ENCODE measurements at regions of chr11 and their contacts with region 1.

Region 1: GRCh38 chr11:85627998-85628770 is at the start of gene TMEM126B:
- DNase-seq: peak; percentile 99 to 100
- H3K4me3 ChIP-seq: peak within 1 kb of the TSS; percentile 58
- H3K4me3 Mint-ChIP-seq: peak within 1 kb of the TSS; percentile 98
- H3K27ac Mint-ChIP-seq: peak within 1 kb of the TSS; percentile 96
- H3K4me1 ChIP-seq: peaks cover 8% of the 10 kb centered on the region; the same call in 1 of the 2 replicates
- H3K4me1 Mint-ChIP-seq: peaks cover 13% of the 10 kb centered on the region
- H3K27me3 ChIP-seq: no peaks in the 10 kb centered on the region
- H3K27me3 Mint-ChIP-seq: no peaks in the 10 kb centered on the region
- CTCF ChIP-seq: no peak
- total RNA-seq, gene TMEM126B: 141 and 144 TPM in 2 replicates

Region 2: GRCh38 chr11:86116386-86116726 is 488.2 kb after region 1 on chr11:
- CTCF ChIA-PET with region 1: no interaction called
- POLR2A ChIA-PET with region 1: no interaction called
- intact Hi-C with region 1: loop called (anchors 2 kb)
- DNase-seq: no peak
- H3K4me3 ChIP-seq: no peak overlapping the region
- H3K4me3 Mint-ChIP-seq: no peak overlapping the region
- H3K27ac Mint-ChIP-seq: no peak overlapping the region
- H3K4me1 ChIP-seq: peaks cover 62% of the 10 kb centered on the region
- H3K4me1 Mint-ChIP-seq: peaks cover 34% of the 10 kb centered on the region
- H3K27me3 ChIP-seq: no peaks in the 10 kb centered on the region
- H3K27me3 Mint-ChIP-seq: no peaks in the 10 kb centered on the region
- CTCF ChIP-seq: no peak

Measured in Caco-2 (cell line).